Activated B cell treated with CpG ODN at 0.5 μM for 24 hours (primary cell): ENCODE measurements at regions of chr12 and their contacts with region 1.

Region 1: DNA sequence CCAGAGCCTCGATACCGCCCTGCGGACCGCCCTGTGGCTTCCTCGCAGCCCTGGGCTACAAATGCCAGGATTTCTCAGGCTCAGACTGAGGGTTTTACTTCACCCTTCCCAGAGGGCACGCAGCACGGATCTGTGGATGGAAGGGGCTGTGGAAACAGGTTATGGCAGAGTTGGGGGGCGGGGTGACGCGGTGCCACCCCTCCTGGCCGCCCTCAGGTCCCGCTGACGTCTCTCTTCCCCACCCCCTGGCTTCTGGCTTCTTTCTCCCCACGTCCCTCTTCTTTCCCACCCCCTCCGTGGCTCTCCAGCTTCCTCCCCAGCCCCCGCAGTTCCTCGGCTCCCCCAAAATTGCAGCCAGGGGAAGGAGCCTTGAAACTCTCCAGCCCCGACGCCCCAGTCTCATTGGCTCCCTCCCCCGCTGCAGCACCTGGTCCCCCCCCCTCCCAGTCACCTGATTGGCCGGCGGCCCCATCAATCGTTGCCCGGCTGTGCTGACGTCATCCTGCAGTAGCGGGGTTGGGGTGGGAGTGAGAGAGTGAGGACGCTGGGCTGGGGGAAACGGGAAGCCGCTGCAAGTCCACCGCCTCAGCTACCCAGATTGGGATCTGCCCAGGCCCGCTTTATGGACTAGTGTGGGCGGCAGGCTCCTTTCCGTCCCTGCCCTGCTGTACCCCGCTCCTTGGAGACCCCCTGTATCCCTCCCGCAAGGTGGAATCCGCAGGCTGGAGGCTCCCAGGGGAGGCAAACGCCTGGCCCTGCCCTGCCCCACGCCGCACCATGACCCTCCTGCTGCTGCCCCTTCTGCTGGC is at the start of gene CLSTN3:
- DNase-seq: peak; percentile 77
- ATAC-seq: peak; percentile 89
- H3K4me3 Mint-ChIP-seq: peak within 1 kb of the TSS; percentile 93
- H3K27ac Mint-ChIP-seq: peak within 1 kb of the TSS; percentile 80
- H3K4me1 Mint-ChIP-seq: peaks cover 24% of the 10 kb centered on the region
- H3K27me3 Mint-ChIP-seq: no peaks in the 10 kb centered on the region
- CTCF ChIP-seq: no peak
- total RNA-seq, gene CLSTN3: 14.1 and 14.8 TPM in 2 replicates

Region 2: DNA sequence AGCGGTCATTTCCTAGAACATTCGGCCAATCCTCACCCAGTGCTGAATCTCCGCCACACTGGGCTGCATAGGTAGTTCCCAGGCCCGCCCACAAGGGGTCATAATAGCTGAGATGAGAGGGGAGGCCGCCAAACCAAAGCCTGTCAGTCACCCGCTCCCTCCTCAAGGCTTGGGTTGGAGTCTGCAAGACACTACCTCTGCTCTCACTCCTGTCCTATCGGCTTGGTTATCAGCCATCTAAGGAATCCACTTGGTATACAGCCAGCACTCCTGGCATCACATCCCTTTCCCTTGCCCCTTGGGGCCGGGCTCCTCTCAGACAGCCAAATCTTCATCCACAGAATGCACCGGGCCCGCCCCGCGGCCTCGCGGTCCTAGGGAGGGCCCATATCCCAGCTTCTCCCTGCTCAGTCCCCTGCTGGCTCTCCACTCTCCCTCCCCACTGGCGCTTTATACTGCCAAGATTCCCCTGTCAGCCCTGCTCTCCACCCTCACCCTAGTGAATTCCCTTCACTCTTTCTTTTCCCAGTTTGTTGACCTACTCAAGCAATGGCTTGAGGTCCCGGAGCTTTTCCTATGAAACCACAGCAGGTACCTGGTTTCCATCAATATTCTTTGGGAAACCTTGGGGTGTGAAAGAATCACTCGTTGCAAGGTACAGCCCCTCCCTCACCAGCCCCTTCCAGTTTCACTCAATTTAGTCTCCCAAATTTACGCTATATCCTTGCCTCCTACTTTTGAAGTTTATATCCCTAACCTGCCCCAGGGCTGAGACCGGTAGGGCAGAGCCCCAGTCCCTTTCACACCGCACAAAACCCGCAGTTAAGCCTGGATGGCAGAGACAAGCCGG is 575.7 kb before region 1 on chr12:
- CTCF ChIA-PET with region 1: no interaction called
- POLR2A ChIA-PET with region 1: no interaction called
- intact Hi-C with region 1: no loop called
- DNase-seq: peak; percentile 61
- ATAC-seq: peak; percentile 77
- H3K4me3 Mint-ChIP-seq: peak overlapping the region; percentile 84
- H3K27ac Mint-ChIP-seq: peak overlapping the region; percentile 70
- H3K4me1 Mint-ChIP-seq: peaks cover 45% of the 10 kb centered on the region
- H3K27me3 Mint-ChIP-seq: no peaks in the 10 kb centered on the region
- CTCF ChIP-seq: peak; percentile 43

Region 3: GRCh38 chr12:6735448-6736191 is 394.5 kb before region 1 on chr12:
- CTCF ChIA-PET with region 1: no interaction called
- POLR2A ChIA-PET with region 1: no interaction called
- intact Hi-C with region 1: no loop called
- DNase-seq: no peak
- ATAC-seq: peak; percentile 62
- H3K4me3 Mint-ChIP-seq: no peak overlapping the region
- H3K27ac Mint-ChIP-seq: no peak overlapping the region
- H3K4me1 Mint-ChIP-seq: no peaks in the 10 kb centered on the region
- H3K27me3 Mint-ChIP-seq: no peaks in the 10 kb centered on the region
- CTCF ChIP-seq: no peak

Region 4: DNA sequence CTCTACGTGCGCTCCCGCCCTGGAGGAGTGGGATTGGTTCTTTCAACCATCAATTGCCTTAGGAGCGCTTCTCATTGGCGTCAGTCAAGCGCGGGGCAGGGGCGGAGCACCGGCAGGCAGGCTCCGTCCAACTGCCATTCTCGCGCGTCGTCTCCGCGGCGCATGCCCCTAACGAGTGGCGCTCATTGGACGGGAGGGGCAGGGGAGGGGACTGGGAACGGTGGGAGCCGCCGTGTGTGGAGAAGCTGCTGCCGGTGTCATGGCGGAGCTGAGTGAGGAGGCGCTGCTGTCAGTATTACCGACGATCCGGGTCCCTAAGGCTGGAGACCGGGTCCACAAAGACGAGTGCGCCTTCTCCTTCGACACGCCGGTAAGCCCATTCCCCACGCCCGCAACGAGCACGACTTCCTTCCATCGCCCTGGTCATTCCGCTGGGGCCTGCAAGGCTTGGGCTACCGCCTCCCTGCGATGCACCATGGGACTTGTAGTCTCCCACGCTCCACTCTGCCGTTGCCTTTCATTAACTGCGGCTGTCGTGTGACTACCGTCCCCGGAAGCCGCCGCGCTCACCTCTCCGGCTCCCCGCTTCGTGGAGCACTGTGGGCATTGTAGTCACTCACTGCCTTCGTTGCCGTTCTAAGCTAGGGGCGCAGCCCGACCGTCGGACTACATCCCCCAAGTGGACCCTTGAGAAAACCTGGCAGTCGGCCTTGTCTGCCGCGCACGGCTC is 278.0 kb before region 1 on chr12 and contains the start of gene USP5:
- CTCF ChIA-PET with region 1: no interaction called
- POLR2A ChIA-PET with region 1: no interaction called
- intact Hi-C with region 1: no loop called
- DNase-seq: peak; percentile 91
- ATAC-seq: peak; percentile 78
- H3K4me3 Mint-ChIP-seq: peak within 1 kb of the TSS; percentile 100
- H3K27ac Mint-ChIP-seq: peak within 1 kb of the TSS; percentile 99
- H3K4me1 Mint-ChIP-seq: peaks cover 30% of the 10 kb centered on the region
- H3K27me3 Mint-ChIP-seq: no peaks in the 10 kb centered on the region
- CTCF ChIP-seq: no peak
- total RNA-seq, gene USP5: 108 and 110 TPM in 2 replicates

Region 5: GRCh38 chr12:7142056-7142644 is 12.1 kb after region 1 on chr12:
- CTCF ChIA-PET with region 1: interaction called, 3 read pairs
- POLR2A ChIA-PET with region 1: no interaction called
- intact Hi-C with region 1: loop called (anchors 1 kb)
- DNase-seq: no peak
- ATAC-seq: peak; percentile 54
- H3K4me3 Mint-ChIP-seq: no peak overlapping the region
- H3K27ac Mint-ChIP-seq: no peak overlapping the region
- H3K4me1 Mint-ChIP-seq: no peaks in the 10 kb centered on the region
- H3K27me3 Mint-ChIP-seq: no peaks in the 10 kb centered on the region
- CTCF ChIP-seq: no peak

Region 6: GRCh38 chr12:7395950-7396349 is 265.9 kb after region 1 on chr12:
- CTCF ChIA-PET with region 1: no interaction called
- POLR2A ChIA-PET with region 1: no interaction called
- intact Hi-C with region 1: no loop called
- DNase-seq: no peak
- ATAC-seq: no peak
- H3K4me3 Mint-ChIP-seq: no peak overlapping the region
- H3K27ac Mint-ChIP-seq: no peak overlapping the region
- H3K4me1 Mint-ChIP-seq: no peaks in the 10 kb centered on the region
- H3K27me3 Mint-ChIP-seq: peaks cover 3% of the 10 kb centered on the region
- CTCF ChIP-seq: no peak